ENCODE measurements at regions of chrX and their contacts with region 1.

Region 1: DNA sequence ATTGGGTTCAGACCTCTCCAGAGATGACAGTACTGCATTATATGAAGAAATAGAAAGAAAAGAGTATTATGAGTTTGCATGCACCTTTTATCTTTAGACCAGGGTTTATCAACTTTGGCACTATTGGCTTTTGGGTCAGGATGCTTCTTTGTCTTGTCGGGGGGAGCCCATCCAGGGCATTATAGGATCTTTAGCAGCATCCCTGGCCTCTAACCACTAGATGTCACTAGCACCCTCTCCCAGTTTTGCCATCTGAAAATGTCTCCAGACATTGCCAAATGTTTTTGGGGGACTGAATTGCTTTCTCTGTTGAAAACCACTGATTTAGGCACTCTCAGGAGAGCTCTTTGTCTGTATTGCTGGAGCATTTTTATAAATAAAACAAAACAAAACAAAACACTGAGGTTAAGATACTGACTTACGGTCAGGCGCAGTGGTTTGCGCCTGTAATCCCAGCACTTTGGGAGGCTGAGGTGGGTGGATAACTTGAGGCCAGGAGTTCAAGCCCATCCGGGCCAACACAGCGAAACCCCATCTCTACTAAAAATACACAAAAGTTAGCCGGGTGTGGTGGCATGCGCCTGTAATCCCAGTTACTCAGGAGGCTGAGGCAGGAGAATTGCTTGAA is 23.6 kb downstream of the CA5B start:
- DNase-seq: no peak
- ATAC-seq: peak; percentile 90
- H3K4me3 ChIP-seq: no peak overlapping the region
- H3K27ac ChIP-seq: no peak overlapping the region
- H3K4me1 ChIP-seq: no peaks in the 10 kb centered on the region
- H3K27me3 ChIP-seq: no peaks in the 10 kb centered on the region
- CTCF ChIP-seq: peak; percentile 83 to 88 (median 87)
- EP300 ChIP-seq: no peak
- POLR2A ChIP-seq: no peak
- RAD21 ChIP-seq: peak; percentile 89

Region 2: GRCh38 chrX:15815779-15816437 is 54.2 kb after region 1 on chrX:
- CTCF ChIA-PET with region 1: interaction called, 3 read pairs
- POLR2A ChIA-PET with region 1: no interaction called
- RAD21 ChIA-PET with region 1: no interaction called
- SMC1A ChIA-PET with region 1: interaction called, 3 read pairs
- in situ Hi-C with region 1: no loop called
- intact Hi-C with region 1: loop called (anchors 5 kb)
- DNase-seq: peak; percentile 8
- ATAC-seq: peak; percentile 96
- H3K4me3 ChIP-seq: no peak overlapping the region
- H3K27ac ChIP-seq: no peak overlapping the region
- H3K4me1 ChIP-seq: peaks cover 6% of the 10 kb centered on the region; the same call in 1 of the 2 replicates
- H3K27me3 ChIP-seq: no peaks in the 10 kb centered on the region
- CTCF ChIP-seq: peak; percentile 45 to 51 (median 49); a peak in 5 of 6 replicates
- EP300 ChIP-seq: no peak
- POLR2A ChIP-seq: no peak
- RAD21 ChIP-seq: peak; percentile 40; the same call in 1 of the 2 replicates

Region 3: GRCh38 chrX:15973299-15973698 is 211.6 kb after region 1 on chrX:
- CTCF ChIA-PET with region 1: interaction called, 3 read pairs
- POLR2A ChIA-PET with region 1: interaction called, 3 read pairs
- RAD21 ChIA-PET with region 1: interaction called, 3 read pairs
- SMC1A ChIA-PET with region 1: no interaction called
- in situ Hi-C with region 1: loop called (anchors 5 kb)
- intact Hi-C with region 1: loop called (anchors 1 kb)
- DNase-seq: peak; percentile 26
- ATAC-seq: peak; percentile 98
- H3K4me3 ChIP-seq: no peak overlapping the region
- H3K27ac ChIP-seq: no peak overlapping the region
- H3K4me1 ChIP-seq: no peaks in the 10 kb centered on the region; the same call in 1 of the 2 replicates
- H3K27me3 ChIP-seq: no peaks in the 10 kb centered on the region
- CTCF ChIP-seq: peak; percentile 71 to 81 (median 79)
- EP300 ChIP-seq: no peak
- POLR2A ChIP-seq: no peak
- RAD21 ChIP-seq: peak; percentile 86

Region 4: GRCh38 chrX:16138108-16138427 is 376.4 kb after region 1 on chrX:
- CTCF ChIA-PET with region 1: interaction called, 5 read pairs
- POLR2A ChIA-PET with region 1: no interaction called
- RAD21 ChIA-PET with region 1: no interaction called
- SMC1A ChIA-PET with region 1: no interaction called
- in situ Hi-C with region 1: no loop called
- intact Hi-C with region 1: loop called (anchors 5 kb)
- DNase-seq: peak; percentile 16
- ATAC-seq: peak; percentile 82
- H3K4me3 ChIP-seq: no peak overlapping the region
- H3K27ac ChIP-seq: no peak overlapping the region
- H3K4me1 ChIP-seq: peaks cover 3% of the 10 kb centered on the region
- H3K27me3 ChIP-seq: peaks cover 0 to 2% of the 10 kb centered on the region in 2 experiments; a peak in 3 of 4 replicates
- CTCF ChIP-seq: peak; percentile 44 to 52 (median 51); a peak in 5 of 6 replicates
- EP300 ChIP-seq: no peak
- POLR2A ChIP-seq: no peak
- RAD21 ChIP-seq: peak; percentile 57

Region 5: DNA sequence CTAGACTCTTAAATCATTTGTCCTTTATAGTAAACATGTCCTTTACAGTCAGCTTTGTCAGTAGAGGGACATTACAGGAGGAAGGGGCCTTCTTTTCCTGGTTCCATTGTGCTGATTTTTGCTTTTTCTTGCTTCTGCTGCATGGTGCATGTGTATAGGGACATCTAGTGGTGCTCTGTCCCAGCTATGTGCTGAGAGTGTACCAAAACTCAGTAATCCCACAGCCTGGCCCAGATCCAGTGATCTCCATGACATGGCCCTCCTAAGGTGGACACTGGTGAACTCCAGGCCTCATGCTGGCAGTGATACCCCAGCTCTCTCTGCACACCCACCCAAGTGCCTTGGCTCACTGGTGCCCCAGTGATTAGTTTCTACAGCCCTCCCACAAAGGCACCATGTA is 450.8 kb after region 1 on chrX:
- CTCF ChIA-PET with region 1: interaction called, 4 read pairs
- POLR2A ChIA-PET with region 1: no interaction called
- RAD21 ChIA-PET with region 1: no interaction called
- SMC1A ChIA-PET with region 1: no interaction called
- in situ Hi-C with region 1: no loop called
- intact Hi-C with region 1: loop called (anchors 1 kb)
- DNase-seq: no peak
- ATAC-seq: peak; percentile 84
- H3K4me3 ChIP-seq: no peak overlapping the region
- H3K27ac ChIP-seq: no peak overlapping the region
- H3K4me1 ChIP-seq: no peaks in the 10 kb centered on the region
- H3K27me3 ChIP-seq: no peaks in the 10 kb centered on the region
- CTCF ChIP-seq: peak; percentile 39 to 48 (median 45); a peak in 4 of 6 replicates
- EP300 ChIP-seq: no peak
- POLR2A ChIP-seq: no peak
- RAD21 ChIP-seq: peak; percentile 63

Region 6: DNA sequence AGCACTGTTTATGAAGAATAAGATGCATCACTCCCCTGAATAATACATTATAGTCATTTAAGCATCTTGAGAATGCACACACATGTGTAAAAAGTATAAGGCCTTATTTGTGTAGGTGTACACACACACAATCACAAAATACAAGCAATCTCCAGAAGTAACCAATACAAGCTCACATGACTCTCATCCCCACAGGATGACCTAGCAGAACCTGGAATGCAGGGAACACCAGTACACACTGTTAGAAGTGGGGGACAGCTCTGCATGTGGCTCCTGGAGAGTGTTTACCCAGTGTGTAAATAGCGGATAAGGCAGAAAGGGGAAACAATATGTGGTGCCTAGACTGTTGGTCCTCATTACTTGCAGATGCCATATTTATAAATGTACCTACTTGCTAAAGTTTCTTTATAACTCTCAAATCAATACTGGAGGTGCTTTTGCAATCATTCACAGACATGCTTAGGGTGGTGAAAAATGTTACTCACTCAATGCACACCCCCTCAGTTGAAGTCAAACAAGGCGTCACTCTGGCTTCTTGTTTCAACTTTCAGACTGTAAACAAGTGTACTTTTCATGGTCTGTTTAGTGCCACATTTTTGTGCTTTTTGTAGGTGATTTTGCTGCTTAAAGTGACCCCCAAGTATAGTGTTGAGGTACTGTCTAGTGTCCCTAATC is 478.7 kb after region 1 on chrX:
- CTCF ChIA-PET with region 1: no interaction called
- POLR2A ChIA-PET with region 1: no interaction called
- RAD21 ChIA-PET with region 1: no interaction called
- SMC1A ChIA-PET with region 1: no interaction called
- in situ Hi-C with region 1: no loop called
- intact Hi-C with region 1: no loop called
- DNase-seq: no peak
- ATAC-seq: no peak
- H3K4me3 ChIP-seq: no peak overlapping the region
- H3K27ac ChIP-seq: no peak overlapping the region
- H3K4me1 ChIP-seq: no peaks in the 10 kb centered on the region
- H3K27me3 ChIP-seq: no peaks in the 10 kb centered on the region
- CTCF ChIP-seq: no peak
- EP300 ChIP-seq: no peak
- POLR2A ChIP-seq: no peak
- RAD21 ChIP-seq: no peak

Region 7: GRCh38 chrX:16436348-16437188 is 674.9 kb after region 1 on chrX:
- CTCF ChIA-PET with region 1: no interaction called
- POLR2A ChIA-PET with region 1: no interaction called
- RAD21 ChIA-PET with region 1: no interaction called
- SMC1A ChIA-PET with region 1: no interaction called
- in situ Hi-C with region 1: loop called (anchors 5 kb)
- intact Hi-C with region 1: no loop called
- DNase-seq: peak; percentile 5
- ATAC-seq: peak; percentile 94
- H3K4me3 ChIP-seq: no peak overlapping the region
- H3K27ac ChIP-seq: no peak overlapping the region
- H3K4me1 ChIP-seq: no peaks in the 10 kb centered on the region
- H3K27me3 ChIP-seq: no peaks in the 10 kb centered on the region; a peak in 1 of 4 replicates
- CTCF ChIP-seq: peak; percentile 61 to 67 (median 63)
- EP300 ChIP-seq: no peak
- POLR2A ChIP-seq: no peak
- RAD21 ChIP-seq: no peak; the same call in 1 of the 2 replicates

Region 8: GRCh38 chrX:16445166-16445752 is 683.6 kb after region 1 on chrX:
- CTCF ChIA-PET with region 1: no interaction called
- POLR2A ChIA-PET with region 1: no interaction called
- RAD21 ChIA-PET with region 1: no interaction called
- SMC1A ChIA-PET with region 1: no interaction called
- in situ Hi-C with region 1: no loop called
- intact Hi-C with region 1: loop called (anchors 1 kb)
- DNase-seq: no peak
- ATAC-seq: peak; percentile 96
- H3K4me3 ChIP-seq: no peak overlapping the region
- H3K27ac ChIP-seq: no peak overlapping the region
- H3K4me1 ChIP-seq: no peaks in the 10 kb centered on the region
- H3K27me3 ChIP-seq: no peaks in the 10 kb centered on the region; a peak in 2 of 4 replicates
- CTCF ChIP-seq: peak; percentile 73 to 89 (median 74)
- EP300 ChIP-seq: no peak
- POLR2A ChIP-seq: no peak
- RAD21 ChIP-seq: peak; percentile 72